ENCODE measurements at regions of chr5 and their contacts with region 1.

Region 1: GRCh38 chr5:135246923-135247795 is 151.9 kb downstream of the MACROH2A1 start:
- DNase-seq: peak; percentile 90
- H3K4me3 ChIP-seq: no peak overlapping the region
- H3K27ac ChIP-seq: peak overlapping the region; percentile 21
- H3K4me1 ChIP-seq: peaks cover 22% of the 10 kb centered on the region
- H3K27me3 ChIP-seq: no peaks in the 10 kb centered on the region
- CTCF ChIP-seq: no peak
- POLR2A ChIP-seq: no peak

Region 2: DNA sequence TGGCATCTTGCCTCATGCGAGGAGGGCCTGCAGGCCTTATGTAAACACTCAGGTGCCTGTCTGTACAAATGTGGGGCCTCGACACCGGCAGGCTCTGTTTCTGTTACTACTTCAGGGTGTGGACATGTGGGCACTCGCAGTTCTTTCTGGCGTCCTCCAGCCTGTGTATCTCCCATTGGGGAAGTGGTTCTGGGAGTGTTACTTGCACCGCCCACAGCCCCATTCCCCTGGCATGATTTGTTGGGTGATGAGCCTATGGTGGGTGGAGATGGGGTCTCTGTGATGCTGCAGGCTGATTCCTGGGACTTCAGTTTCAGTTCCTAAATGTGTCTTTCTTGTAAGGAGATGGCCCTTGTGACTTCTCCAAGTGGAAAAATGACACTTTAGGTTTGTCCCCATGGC is 131.0 kb before region 1 on chr5:
- CTCF ChIA-PET with region 1: no interaction called
- POLR2A ChIA-PET with region 1: no interaction called
- dilution Hi-C with region 1: no loop called
- intact Hi-C with region 1: no loop called
- DNase-seq: no peak
- H3K4me3 ChIP-seq: no peak overlapping the region
- H3K27ac ChIP-seq: no peak overlapping the region
- H3K4me1 ChIP-seq: no peaks in the 10 kb centered on the region
- H3K27me3 ChIP-seq: peaks cover 0 to 4% of the 10 kb centered on the region in 2 experiments
- CTCF ChIP-seq: no peak
- POLR2A ChIP-seq: no peak

Region 3: GRCh38 chr5:135263022-135263668 is 16.0 kb after region 1 on chr5:
- CTCF ChIA-PET with region 1: interaction called, 4 read pairs
- POLR2A ChIA-PET with region 1: no interaction called
- dilution Hi-C with region 1: no loop called
- intact Hi-C with region 1: loop called (anchors 1 kb)
- DNase-seq: no peak
- H3K4me3 ChIP-seq: no peak overlapping the region
- H3K27ac ChIP-seq: no peak overlapping the region
- H3K4me1 ChIP-seq: peaks cover 9% of the 10 kb centered on the region
- H3K27me3 ChIP-seq: no peaks in the 10 kb centered on the region
- CTCF ChIP-seq: no peak
- POLR2A ChIP-seq: no peak

Region 4: DNA sequence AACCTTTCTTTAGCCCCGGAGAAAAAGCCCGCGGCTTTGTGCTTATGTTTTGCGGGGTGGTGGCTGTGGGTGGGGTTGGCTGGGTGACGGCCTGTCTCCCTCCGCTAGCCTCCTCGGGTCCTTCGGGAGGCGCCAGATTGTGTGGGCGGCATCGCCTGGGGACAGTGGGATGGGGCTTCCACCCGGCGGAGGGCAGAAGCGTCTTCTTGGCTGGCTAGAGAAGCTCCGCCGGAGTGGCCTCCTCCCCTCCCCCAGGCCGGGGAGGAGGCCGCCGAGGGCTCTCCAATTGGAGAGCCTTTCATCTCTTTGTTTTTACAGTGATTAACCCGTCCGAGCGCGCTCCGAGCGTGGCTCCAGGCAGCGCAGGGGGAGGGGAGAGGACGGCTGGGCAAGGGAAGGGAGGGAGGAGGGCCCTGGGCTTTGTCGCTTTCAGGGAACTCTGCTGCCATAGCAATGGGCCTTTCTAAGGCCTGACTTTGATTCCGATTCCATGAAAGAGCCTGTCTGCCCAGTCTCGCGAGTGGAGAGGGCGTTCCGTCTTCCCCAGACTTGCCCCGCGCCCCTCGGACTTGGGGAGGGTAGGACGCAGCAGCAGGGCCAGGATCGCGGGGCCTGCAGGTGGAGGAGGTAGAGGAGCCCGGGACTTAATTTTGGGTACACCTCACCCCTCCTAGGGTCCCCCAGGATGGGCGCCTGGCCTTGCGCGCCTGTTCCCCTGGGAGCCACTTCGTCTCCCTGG is 241.7 kb after region 1 on chr5:
- CTCF ChIA-PET with region 1: no interaction called
- POLR2A ChIA-PET with region 1: no interaction called
- dilution Hi-C with region 1: no loop called
- intact Hi-C with region 1: no loop called
- DNase-seq: peak; percentile 11
- H3K4me3 ChIP-seq: no peak overlapping the region
- H3K27ac ChIP-seq: no peak overlapping the region
- H3K4me1 ChIP-seq: peaks cover 3% of the 10 kb centered on the region
- H3K27me3 ChIP-seq: peaks cover 70 to 71% of the 10 kb centered on the region in 2 experiments
- CTCF ChIP-seq: no peak
- POLR2A ChIP-seq: no peak